ENCODE measurements at regions of chr3 and their contacts with region 1.

Region 1: GRCh38 chr3:23751212-23751723 is 54.5 kb upstream of the UBE2E1 start:
- DNase-seq: no peak
- ATAC-seq: peak; percentile 33

Region 2: DNA sequence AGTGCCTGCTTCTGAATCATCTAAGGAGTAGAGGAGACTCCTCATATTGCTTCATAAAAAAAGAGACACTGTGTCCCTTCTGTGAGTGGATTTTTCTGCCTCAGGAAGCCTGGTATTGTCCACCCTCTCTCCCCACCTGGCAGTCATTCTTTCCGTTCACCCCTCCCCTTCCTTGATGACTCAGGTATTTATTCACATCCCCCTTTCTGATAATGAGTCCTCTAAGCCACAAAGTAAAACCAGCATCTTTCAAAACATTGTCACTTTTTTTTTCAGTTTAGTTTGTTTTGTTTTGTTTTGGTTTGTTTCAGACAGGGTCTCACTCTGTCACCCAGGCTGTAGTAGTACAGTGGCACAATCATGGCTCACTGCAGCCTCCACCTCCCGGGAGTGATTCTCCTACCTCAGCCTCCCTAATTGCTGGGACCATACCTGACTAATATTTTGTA is 10.7 kb before region 1 on chr3:
- intact Hi-C with region 1: loop called (anchors 1 kb)
- DNase-seq: no peak
- ATAC-seq: no peak

Measured in Right ventricle myocardium inferior (tissue), 1 donor.